Uterus (tissue), 4 donors: ENCODE measurements at regions of chr5 and their contacts with region 1.

Region 1: DNA sequence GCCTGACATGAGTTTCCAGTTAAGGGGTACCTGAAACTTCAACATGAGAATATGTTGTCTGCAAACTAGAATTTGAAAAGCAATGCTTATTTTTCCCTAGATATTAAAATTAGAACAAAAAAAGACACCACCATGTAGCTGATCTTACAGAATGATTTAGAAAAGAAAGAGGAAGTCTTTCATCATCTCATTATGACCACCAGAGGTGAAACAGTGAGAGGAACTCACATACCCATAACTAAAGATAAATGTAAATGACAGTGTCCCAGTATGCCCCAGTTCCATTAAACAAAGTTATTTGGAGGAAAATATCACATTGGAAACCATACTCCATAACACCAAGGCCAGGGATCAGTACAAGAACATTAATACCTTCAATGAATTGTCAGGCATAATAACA is 6.9 kb downstream of the TAF7 start:
- DNase-seq: no peak
- H3K4me3 ChIP-seq: no peak overlapping the region
- H3K27ac ChIP-seq: no peak overlapping the region
- H3K4me1 ChIP-seq: no peaks in the 10 kb centered on the region
- H3K27me3 ChIP-seq: no peaks in the 10 kb centered on the region
- CTCF ChIP-seq: no peak
- POLR2A ChIP-seq: no peak

Region 2: DNA sequence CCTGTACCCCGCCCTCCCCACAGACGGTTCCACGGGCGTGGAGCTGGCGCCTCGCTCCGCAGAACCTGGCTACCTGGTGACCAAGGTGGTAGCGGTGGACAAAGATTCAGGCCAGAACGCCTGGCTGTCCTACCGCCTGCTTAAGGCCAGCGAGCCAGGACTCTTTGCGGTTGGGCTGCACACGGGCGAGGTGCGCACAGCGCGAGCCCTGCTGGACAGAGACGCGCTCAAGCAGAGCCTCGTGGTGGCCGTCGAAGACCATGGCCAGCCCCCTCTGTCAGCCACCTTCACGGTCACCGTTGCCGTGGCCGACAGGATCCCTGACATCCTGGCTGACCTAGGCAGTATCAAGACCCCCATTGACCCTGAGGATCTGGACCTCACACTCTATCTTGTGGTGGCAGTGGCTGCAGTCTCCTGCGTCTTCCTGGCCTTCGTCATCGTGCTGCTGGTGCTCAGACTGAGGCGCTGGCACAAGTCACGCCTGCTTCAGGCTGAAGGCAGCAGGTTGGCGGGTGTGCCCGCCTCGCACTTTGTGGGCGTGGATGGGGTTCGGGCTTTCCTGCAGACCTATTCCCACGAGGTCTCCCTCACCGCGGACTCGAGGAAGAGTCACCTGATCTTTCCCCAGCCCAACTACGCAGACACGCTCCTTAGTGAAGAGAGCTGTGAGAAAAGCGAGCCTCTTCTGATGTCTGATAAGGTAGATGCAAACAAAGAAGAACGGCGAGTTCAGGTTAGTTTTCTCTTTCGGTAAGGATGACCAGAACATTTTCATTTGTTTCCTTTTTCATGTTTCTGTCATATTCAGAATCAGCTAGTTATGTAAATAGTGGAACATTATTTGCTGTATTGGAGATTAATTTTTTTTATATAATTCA is 52.5 kb after region 1 on chr5:
- intact Hi-C with region 1: loop called (anchors 2 kb)
- DNase-seq: no peak
- H3K4me3 ChIP-seq: no peak overlapping the region
- H3K27ac ChIP-seq: no peak overlapping the region
- H3K4me1 ChIP-seq: no peaks in the 10 kb centered on the region
- H3K27me3 ChIP-seq: no peaks in the 10 kb centered on the region
- CTCF ChIP-seq: no peak
- POLR2A ChIP-seq: no peak